CD4-positive, alpha-beta memory T cell (primary cell): ENCODE measurements at regions of chr17 and their contacts with region 1.

Region 1: GRCh38 chr17:7572588-7573323 is 6.7 kb upstream of the CD68 start:
- DNase-seq: peak; percentile 100
- H3K4me3 ChIP-seq: peak overlapping the region; percentile 57 to 93
- H3K4me3 Mint-ChIP-seq: peak overlapping the region; percentile 94 to 100 (median 98)
- H3K27ac ChIP-seq: peak overlapping the region; percentile 97
- H3K27ac Mint-ChIP-seq: peak overlapping the region; percentile 98 to 100 (median 99)
- H3K4me1 ChIP-seq: peaks cover 44% of the 10 kb centered on the region
- H3K4me1 Mint-ChIP-seq: peaks cover 25 to 62% (median 41%) of the 10 kb centered on the region in 4 donors
- H3K27me3 ChIP-seq: no peaks in the 10 kb centered on the region
- H3K27me3 Mint-ChIP-seq: no peaks in the 10 kb centered on the region

Region 2: DNA sequence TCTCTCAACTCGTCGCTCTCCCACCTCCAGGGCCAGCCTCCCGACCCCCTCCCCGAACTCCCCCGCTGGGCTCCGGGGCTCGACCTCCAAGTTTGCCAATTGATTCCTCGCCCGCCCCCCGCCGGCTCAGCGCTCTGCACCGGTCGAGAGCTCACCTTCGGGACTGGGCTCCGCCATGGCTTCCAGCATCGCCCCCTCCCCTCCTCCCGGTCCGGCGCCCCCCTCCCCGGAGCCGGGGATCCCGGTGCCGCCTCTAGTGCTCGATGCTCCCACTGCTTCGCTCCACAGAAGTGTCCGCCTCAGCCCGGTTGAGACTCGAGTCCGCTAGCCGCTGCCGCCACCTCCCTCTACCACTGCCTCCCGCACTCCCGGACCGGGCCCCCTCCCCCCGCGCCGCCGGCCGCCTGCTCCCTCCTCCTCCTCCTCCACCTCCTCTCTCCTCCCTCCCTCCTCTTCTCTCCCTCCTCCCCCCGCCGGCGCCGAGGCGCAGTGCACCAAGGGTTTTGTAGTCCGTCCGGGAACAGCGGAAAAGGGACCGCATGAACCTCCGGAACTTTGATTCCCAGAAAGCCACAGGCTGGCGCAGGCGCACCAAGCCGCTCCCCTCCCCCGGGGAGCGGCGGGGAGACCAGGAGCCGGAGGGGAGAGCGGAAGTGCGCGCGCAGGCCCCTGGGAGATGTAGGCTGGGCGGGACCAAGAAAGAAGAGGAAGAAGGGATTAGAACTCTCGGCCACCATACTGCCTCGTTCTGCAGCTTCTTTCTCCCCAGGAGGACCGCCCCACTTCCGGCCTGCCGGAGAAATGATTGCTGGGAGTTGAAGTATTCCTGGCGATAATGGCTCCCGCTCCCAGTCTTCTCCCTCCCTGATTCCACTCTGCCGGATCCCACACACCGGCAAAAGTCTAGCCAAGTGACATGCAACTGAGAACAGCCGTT is 333.4 kb before region 1 on chr17 and contains the start of gene PHF23:
- CTCF ChIA-PET with region 1: no interaction called
- POLR2A ChIA-PET with region 1: interaction called, 7 read pairs
- intact Hi-C with region 1: loop called (anchors 2 kb)
- DNase-seq: peak; percentile 97 to 98 (median 98)
- H3K4me3 ChIP-seq: peak within 1 kb of the TSS; percentile 85 to 86
- H3K4me3 Mint-ChIP-seq: peak within 1 kb of the TSS; percentile 94 to 99 (median 96)
- H3K27ac ChIP-seq: peak within 1 kb of the TSS; percentile 85
- H3K27ac Mint-ChIP-seq: peak within 1 kb of the TSS; percentile 90 to 100 (median 98)
- H3K4me1 ChIP-seq: peaks cover 61% of the 10 kb centered on the region
- H3K4me1 Mint-ChIP-seq: peaks cover 41 to 75% (median 54%) of the 10 kb centered on the region in 4 donors
- H3K27me3 ChIP-seq: no peaks in the 10 kb centered on the region
- H3K27me3 Mint-ChIP-seq: peaks cover 0 to 2% of the 10 kb centered on the region in 2 donors
- total RNA-seq, gene PHF23: 45.8 to 55.8 TPM

Region 3: DNA sequence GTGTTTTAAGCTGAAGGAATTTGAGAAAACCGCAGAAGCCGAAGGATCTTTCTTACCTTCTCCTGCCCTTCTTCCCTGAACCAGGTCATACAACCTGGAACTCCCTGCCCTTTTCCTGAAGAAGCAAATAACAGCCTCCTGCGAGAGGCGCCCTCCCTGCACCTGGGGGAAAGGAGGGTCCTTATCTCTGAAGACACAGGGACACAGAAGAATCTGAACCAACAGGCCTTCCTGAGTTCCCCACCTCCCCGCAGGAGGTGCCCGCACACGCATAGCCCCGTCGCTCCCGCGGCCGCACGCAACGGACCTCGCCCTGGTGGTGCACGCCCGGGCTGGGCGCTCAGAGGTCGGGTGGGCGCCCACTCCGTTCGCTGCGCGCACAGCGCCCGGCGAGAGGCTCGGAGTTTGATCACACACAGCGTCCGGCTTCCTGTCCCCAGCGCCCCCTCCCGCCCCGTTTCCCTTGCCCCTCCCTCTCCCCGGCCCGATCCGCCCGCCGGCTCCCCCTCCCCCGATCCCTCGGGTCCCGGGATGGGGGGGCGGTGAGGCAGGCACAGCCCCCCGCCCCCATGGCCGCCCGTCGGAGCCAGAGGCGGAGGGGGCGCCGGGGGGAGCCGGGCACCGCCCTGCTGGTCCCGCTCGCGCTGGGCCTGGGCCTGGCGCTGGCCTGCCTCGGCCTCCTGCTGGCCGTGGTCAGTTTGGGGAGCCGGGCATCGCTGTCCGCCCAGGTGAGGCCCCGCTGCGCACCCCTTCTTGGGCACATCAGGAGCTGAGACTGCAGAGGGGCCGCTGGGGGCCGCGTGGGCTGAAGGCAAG is 24.0 kb before region 1 on chr17 and contains the start of gene TNFSF12:
- CTCF ChIA-PET with region 1: no interaction called
- POLR2A ChIA-PET with region 1: interaction called, 18 read pairs
- intact Hi-C with region 1: loop called (anchors 2 kb)
- DNase-seq: peak; percentile 38 to 64 (median 42)
- H3K4me3 ChIP-seq: peak within 1 kb of the TSS; percentile 72 to 82
- H3K4me3 Mint-ChIP-seq: peak within 1 kb of the TSS; percentile 88 to 96 (median 92)
- H3K27ac ChIP-seq: peak within 1 kb of the TSS; percentile 79
- H3K27ac Mint-ChIP-seq: peak within 1 kb of the TSS; percentile 81 to 96 (median 94)
- H3K4me1 ChIP-seq: peaks cover 37% of the 10 kb centered on the region
- H3K4me1 Mint-ChIP-seq: peaks cover 30 to 52% (median 43%) of the 10 kb centered on the region in 4 donors
- H3K27me3 ChIP-seq: no peaks in the 10 kb centered on the region
- H3K27me3 Mint-ChIP-seq: no peaks in the 10 kb centered on the region
- total RNA-seq, gene TNFSF12: 45.1 to 52.2 TPM

Region 4: GRCh38 chr17:7589204-7589868 is 16.6 kb after region 1 on chr17:
- CTCF ChIA-PET with region 1: interaction called, 12 read pairs
- POLR2A ChIA-PET with region 1: interaction called, 220 read pairs
- intact Hi-C with region 1: no loop called
- DNase-seq: peak; percentile 57 to 65 (median 60)
- H3K4me3 ChIP-seq: no peak overlapping the region
- H3K4me3 Mint-ChIP-seq: no peak overlapping the region
- H3K27ac ChIP-seq: no peak overlapping the region
- H3K27ac Mint-ChIP-seq: no peak overlapping the region
- H3K4me1 ChIP-seq: peaks cover 24% of the 10 kb centered on the region
- H3K4me1 Mint-ChIP-seq: peaks cover 5 to 22% (median 11%) of the 10 kb centered on the region in 4 donors
- H3K27me3 ChIP-seq: no peaks in the 10 kb centered on the region
- H3K27me3 Mint-ChIP-seq: no peaks in the 10 kb centered on the region

Region 5: DNA sequence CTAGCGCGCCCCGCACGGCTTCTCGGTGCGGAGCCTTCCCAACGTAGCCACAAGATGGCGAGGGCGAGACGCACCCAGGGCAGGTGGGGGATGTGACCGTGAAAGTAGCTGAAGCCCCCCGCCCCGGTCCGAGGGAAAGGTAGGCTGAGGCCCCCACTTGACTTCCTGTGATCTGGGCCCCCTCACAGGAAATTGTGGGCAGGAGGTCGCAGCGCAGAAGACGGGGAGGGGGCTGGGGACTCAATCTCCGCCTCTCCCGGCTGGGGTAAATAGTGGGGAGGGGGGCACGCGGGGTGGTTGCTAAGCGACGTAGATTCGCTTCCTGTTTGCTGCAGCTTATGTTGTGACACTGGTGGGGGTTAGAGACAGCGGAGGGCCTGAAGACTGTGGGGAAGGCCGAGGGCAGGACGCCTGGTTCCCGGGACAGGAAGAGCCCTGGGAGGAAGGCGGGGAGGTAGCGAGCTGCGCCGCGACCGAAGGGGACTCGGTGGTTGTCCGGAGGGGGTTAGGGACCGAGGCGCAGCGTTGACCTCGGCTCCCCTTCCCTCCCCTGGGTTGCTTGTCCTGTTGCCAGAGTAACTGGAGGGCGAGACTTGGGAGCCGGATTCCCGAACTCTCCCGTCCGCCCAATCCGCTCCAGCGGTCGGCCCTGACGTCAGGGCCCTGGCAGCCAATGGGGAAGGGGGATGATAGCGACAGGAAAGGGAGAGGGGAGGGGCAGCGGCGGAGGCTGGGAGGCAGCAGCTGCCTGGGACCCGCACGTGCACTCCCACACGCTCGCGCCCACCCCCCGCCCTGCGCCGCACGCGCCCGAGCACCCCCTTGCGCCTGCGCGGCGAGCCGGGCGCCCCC is 262.4 kb after region 1 on chr17:
- CTCF ChIA-PET with region 1: no interaction called
- POLR2A ChIA-PET with region 1: no interaction called
- intact Hi-C with region 1: loop called (anchors 2 kb)
- DNase-seq: peak; percentile 90 to 98 (median 92)
- H3K4me3 ChIP-seq: peak overlapping the region; percentile 76 to 84
- H3K4me3 Mint-ChIP-seq: peak overlapping the region; percentile 90 to 98 (median 94)
- H3K27ac ChIP-seq: peak overlapping the region; percentile 98
- H3K27ac Mint-ChIP-seq: peak overlapping the region; percentile 99 to 100 (median 99)
- H3K4me1 ChIP-seq: peaks cover 45% of the 10 kb centered on the region
- H3K4me1 Mint-ChIP-seq: peaks cover 36 to 64% (median 42%) of the 10 kb centered on the region in 4 donors
- H3K27me3 ChIP-seq: no peaks in the 10 kb centered on the region
- H3K27me3 Mint-ChIP-seq: peaks cover 0 to 9% of the 10 kb centered on the region in 2 donors